Posterior cingulate gyrus (tissue), 11 donors: ENCODE measurements at regions of chr16 and their contacts with region 1.

Region 1: GRCh38 chr16:84144859-84145639 is at the starts of genes DNAAF1 and HSDL1:
- DNase-seq: peak; percentile 85 to 99 (median 94)

Region 2: DNA sequence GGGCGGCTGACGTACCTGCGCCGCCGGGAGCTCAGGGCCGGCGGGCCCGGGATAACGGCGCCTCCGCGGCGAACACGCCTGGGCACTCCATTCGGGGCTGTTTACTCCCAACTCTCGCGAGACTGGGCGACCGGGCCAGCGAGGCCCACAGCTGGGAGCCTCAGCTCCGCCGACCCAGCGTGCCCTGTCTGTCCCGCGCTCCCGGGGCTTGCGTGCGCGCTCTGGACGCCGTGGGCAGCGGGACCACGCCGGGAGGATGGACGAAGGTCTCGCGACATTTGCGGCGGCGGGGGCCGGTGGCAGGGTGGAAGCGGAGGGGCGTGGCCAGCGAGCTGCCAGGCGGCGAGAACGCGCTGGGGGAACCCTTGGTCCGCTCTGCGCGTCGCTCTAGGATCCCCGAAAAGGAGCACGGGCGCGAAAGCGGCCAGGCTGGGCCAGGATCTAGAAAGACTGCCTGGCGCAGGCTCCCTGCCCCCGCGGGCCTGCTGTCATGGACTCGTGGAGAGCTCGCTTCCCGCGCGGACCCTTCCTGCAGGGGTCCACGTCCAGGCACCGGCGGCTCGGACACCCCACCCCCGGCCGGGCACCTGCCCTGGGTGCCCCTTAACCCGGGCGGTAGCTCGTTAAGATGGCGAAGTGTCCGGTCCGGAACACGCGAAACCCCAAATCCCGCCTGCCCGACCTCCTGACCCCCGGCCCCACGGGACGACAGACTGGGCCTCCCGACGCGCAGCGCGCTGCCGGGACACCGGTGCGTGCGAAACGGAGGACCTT is 28.1 kb before region 1 on chr16 and contains the start of gene MBTPS1:
- intact Hi-C with region 1: loop called (anchors 2 kb)
- DNase-seq: peak; percentile 95 to 100 (median 98)